Activated CD8-positive, alpha-beta memory T cell treated with anti-CD3 and anti-CD28 coated beads, Interleukin-2, amount 10 ng/mL, durations not matched to agents 7 days and 5 days (primary cell): ENCODE measurements at regions of chr22 and their contacts with region 1.

Region 1: GRCh38 chr22:31561238-31561887 is 65.0 kb downstream of the SFI1 start:
- DNase-seq: peak; percentile 69
- ATAC-seq: peak; percentile 89
- H3K4me3 Mint-ChIP-seq: no peak overlapping the region
- H3K27ac Mint-ChIP-seq: peak overlapping the region; percentile 45
- H3K4me1 Mint-ChIP-seq: peaks cover 2% of the 10 kb centered on the region
- H3K27me3 Mint-ChIP-seq: no peaks in the 10 kb centered on the region

Region 2: GRCh38 chr22:31572939-31573338 is 11.6 kb after region 1 on chr22:
- CTCF ChIA-PET with region 1: interaction called, 14 read pairs
- DNase-seq: no peak
- ATAC-seq: no peak
- H3K4me3 Mint-ChIP-seq: no peak overlapping the region
- H3K27ac Mint-ChIP-seq: no peak overlapping the region
- H3K4me1 Mint-ChIP-seq: peaks cover 7% of the 10 kb centered on the region
- H3K27me3 Mint-ChIP-seq: no peaks in the 10 kb centered on the region